ENCODE measurements at regions of chr1 and their contacts with region 1.

Region 1: DNA sequence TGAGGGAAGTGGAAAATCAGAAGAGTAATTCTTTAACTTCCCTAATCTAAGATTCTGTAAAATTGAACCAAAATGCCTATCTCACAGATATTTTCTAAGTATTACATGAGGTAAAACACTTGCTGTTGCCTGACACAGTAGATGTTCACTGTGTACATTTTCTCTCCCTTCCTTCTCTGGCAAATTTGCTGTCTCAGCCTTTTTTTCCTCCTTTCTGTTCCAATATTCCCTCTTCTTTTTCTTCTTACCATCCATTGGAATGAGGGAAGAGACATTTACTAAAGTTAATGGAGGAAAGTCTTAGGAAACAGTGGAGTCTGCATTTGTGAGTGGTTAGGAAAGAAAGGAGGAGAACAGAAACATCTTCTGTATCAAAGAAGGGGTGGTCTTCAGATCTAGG is 239.9 kb downstream of the ZP4 start:
- DNase-seq: no peak
- ATAC-seq: no peak
- H3K4me3 ChIP-seq: no peak overlapping the region
- H3K27ac ChIP-seq: no peak overlapping the region
- H3K4me1 ChIP-seq: no peaks in the 10 kb centered on the region
- H3K27me3 ChIP-seq: no peaks in the 10 kb centered on the region
- CTCF ChIP-seq: no peak

Region 2: GRCh38 chr1:237482777-237483176 is 168.0 kb before region 1 on chr1:
- CTCF ChIA-PET with region 1: no interaction called
- POLR2A ChIA-PET with region 1: interaction called, 13 read pairs
- in situ Hi-C with region 1: no loop called
- intact Hi-C with region 1: no loop called
- DNase-seq: no peak
- ATAC-seq: no peak
- H3K4me3 ChIP-seq: no peak overlapping the region
- H3K27ac ChIP-seq: no peak overlapping the region
- H3K4me1 ChIP-seq: no peaks in the 10 kb centered on the region
- H3K27me3 ChIP-seq: no peaks in the 10 kb centered on the region; the same call in 1 of the 2 replicates
- CTCF ChIP-seq: no peak

Measured in Panc1 (cell line).